AG04449 (cell line): ENCODE measurements at regions of chr6 and their contacts with region 1.

Region 1: GRCh38 chr6:135951169-135951568 is 99.7 kb downstream of the PDE7B start:
- DNase-seq: no peak
- H3K4me3 ChIP-seq: no peak overlapping the region
- CTCF ChIP-seq: no peak

Region 2: DNA sequence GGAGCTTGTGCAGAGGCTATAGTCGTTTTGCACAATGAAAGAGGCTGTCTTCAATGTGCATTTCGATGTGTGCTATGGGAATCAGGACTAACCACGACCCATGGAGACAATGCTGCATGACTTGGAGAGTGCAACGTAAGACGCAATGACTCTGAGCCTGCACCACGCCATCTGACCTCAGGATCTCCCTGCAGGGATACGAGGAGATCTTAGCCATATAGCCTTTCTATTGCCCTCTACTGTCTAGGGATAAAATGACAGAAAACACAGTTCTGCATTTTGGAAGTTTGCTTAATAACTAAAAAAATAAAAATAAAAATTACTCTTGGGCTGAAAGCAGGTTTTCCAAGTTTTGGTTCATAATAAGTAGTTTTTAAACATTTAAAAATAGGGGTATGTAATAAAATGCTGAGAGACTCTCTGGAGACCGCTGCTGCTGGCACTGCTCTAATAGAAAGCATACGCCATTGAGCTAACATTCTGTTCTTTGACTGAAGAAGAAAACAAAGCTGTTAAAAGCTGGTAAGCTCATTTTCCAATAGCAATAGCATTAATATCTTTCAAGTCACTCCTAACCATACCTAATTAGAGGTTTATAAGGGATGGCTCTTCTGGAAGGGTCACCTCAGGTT is 12.5 kb before region 1 on chr6:
- CTCF ChIA-PET with region 1: interaction called, 25 read pairs
- POLR2A ChIA-PET with region 1: no interaction called
- DNase-seq: no peak
- H3K4me3 ChIP-seq: no peak overlapping the region
- CTCF ChIP-seq: peak; percentile 24

Region 3: GRCh38 chr6:136113736-136114173 is 162.6 kb after region 1 on chr6:
- CTCF ChIA-PET with region 1: no interaction called
- POLR2A ChIA-PET with region 1: no interaction called
- DNase-seq: peak; percentile 60
- H3K4me3 ChIP-seq: no peak overlapping the region
- CTCF ChIP-seq: no peak